ENCODE measurements at regions of chr2 and their contacts with region 1.

Region 1: DNA sequence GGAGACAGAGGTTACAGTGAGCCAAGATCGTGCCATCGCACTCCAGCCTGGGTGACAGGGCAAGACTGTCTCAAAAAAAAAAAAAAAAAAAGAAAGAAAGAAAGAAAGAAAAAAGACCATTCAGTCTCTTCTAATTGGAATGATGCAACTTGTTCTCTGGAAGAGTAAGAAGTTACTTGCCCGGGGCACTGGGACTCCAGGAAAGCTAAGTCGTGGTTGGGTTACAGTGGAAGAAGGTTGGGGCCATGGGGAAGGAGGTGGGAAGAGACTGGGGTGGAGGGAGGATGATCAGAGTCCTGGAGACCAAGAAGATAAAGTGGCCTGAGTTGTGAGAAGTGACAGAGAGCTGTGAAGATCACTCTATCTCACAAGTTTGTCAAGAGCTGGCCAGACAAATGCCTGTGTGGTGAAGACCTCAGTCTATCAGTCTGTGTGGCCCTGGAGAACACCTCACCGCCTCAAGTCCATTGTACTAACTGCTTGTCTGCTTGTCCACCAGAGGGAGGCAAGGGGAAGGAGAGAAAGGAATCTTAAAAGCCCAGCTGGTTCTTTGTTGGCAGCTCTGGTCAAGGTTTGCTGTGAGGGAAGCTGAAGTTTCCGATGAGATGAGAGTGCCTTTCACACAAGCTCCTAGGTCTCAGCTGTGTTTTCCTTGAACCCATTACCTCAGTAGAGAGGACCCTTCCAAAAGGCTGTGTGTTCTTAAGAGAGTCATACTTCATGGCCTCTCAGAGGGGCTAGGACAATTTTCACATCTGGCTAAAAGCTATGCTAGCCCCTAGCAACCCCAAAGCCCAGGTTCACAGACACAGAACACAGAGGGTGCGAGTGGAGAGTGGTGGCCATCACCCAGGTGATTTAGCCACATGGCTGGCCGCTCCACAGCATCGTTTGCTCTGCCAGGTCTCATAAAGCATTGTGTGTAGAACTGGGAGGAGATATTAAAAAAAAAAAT is 72.0 kb upstream of the TMEM178A start:
- DNase-seq: peak; percentile 66
- H3K4me3 ChIP-seq: no peak overlapping the region
- H3K27ac ChIP-seq: no peak overlapping the region
- H3K4me1 ChIP-seq: no peaks in the 10 kb centered on the region
- H3K27me3 ChIP-seq: no peaks in the 10 kb centered on the region
- CTCF ChIP-seq: peak; percentile 63 to 75

Region 2: DNA sequence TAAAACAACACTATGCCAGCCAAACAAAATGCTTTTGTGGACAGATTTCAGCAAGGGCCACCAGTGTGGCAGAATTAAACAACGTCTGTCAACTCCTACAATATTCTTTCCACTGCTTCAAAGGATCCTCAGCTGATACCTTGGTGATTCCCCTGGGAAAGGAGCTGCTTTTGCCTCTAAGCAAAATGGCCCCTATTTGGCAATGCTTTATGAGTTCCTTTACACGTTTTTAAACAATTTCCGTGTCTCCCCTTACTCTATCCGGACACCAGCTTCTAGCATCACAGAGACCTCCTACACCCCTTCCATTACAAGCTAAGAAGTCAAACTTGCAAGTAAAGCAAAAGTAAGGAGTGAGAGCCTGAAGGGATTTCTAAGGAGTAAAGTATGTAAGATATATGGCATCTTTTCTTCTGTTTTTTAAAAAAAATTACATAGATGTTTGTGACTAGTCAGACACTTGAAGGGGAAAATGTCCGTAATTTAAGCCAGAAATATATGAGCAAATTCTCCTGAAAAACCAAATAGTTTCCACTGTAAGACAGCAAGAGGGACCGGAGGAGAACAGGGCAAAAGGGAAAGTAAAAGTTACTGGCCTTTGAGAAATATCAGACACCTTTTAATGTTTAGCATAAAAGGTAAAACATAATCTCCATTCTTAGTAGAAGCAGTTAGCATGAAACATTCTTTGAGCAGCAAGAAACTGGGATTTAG is 474.8 kb before region 1 on chr2:
- CTCF ChIA-PET with region 1: no interaction called
- dilution Hi-C with region 1: no loop called
- in situ Hi-C with region 1: no loop called
- intact Hi-C with region 1: no loop called
- DNase-seq: peak; percentile 19
- H3K4me3 ChIP-seq: peak overlapping the region; percentile 70 to 77 (median 74)
- H3K27ac ChIP-seq: peak overlapping the region; percentile 81
- H3K4me1 ChIP-seq: peaks cover 25% of the 10 kb centered on the region
- H3K27me3 ChIP-seq: no peaks in the 10 kb centered on the region
- CTCF ChIP-seq: no peak

Region 3: GRCh38 chr2:39492095-39492590 is 101.6 kb before region 1 on chr2:
- CTCF ChIA-PET with region 1: interaction called, 15 read pairs
- dilution Hi-C with region 1: no loop called
- in situ Hi-C with region 1: no loop called
- intact Hi-C with region 1: no loop called
- DNase-seq: peak; percentile 97
- H3K4me3 ChIP-seq: no peak overlapping the region
- H3K27ac ChIP-seq: peak overlapping the region; percentile 70
- H3K4me1 ChIP-seq: peaks cover 28% of the 10 kb centered on the region
- H3K27me3 ChIP-seq: no peaks in the 10 kb centered on the region
- CTCF ChIP-seq: no peak

Region 4: DNA sequence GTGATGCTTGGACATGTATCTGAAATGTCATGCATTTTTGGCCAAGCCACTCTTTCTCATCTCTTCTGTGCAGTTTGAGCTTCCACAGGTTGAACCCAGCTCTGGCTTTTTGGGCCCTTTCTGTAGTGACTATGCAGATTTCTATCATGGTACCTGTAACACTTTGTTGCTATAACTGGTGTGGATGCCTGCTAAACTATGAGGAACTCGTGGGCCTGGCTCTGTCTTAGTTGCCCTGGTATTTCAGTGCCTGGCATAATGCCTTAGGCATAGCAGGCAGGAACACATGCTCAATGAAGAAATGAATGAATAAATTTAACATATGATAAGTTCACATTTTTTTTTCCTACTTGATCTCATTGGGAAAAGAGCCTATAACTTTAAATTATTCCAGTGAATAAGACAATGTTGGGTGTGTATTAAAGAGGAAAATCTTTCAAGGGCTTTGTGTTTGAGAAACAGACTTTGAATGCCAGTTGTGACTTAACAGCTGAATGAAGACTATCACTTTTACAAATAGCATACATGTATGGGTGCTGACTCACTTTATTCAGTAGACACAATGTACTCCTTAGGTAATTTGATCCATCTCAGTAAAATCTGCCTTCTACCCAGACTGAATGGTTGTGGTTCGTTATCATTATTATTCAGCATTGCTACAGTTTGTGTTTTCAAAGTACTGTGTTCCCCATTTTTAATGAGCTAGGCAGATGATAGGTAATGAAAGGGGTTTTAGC is 70.2 kb before region 1 on chr2:
- CTCF ChIA-PET with region 1: no interaction called
- dilution Hi-C with region 1: no loop called
- in situ Hi-C with region 1: no loop called
- intact Hi-C with region 1: loop called (anchors 2 kb)
- DNase-seq: peak; percentile 83
- H3K4me3 ChIP-seq: no peak overlapping the region
- H3K27ac ChIP-seq: peak overlapping the region; percentile 69
- H3K4me1 ChIP-seq: peaks cover 30% of the 10 kb centered on the region
- H3K27me3 ChIP-seq: no peaks in the 10 kb centered on the region
- CTCF ChIP-seq: no peak

Region 5: GRCh38 chr2:39657287-39657937 is 63.7 kb after region 1 on chr2:
- CTCF ChIA-PET with region 1: no interaction called
- dilution Hi-C with region 1: no loop called
- in situ Hi-C with region 1: no loop called
- intact Hi-C with region 1: no loop called
- DNase-seq: no peak
- H3K4me3 ChIP-seq: no peak overlapping the region
- H3K27ac ChIP-seq: no peak overlapping the region
- H3K4me1 ChIP-seq: no peaks in the 10 kb centered on the region
- H3K27me3 ChIP-seq: no peaks in the 10 kb centered on the region
- CTCF ChIP-seq: no peak

Region 6: GRCh38 chr2:39696838-39697237 is 103.1 kb after region 1 on chr2:
- CTCF ChIA-PET with region 1: interaction called, 4 read pairs
- dilution Hi-C with region 1: no loop called
- in situ Hi-C with region 1: no loop called
- intact Hi-C with region 1: loop called (anchors 1 kb)
- DNase-seq: peak; percentile 53
- H3K4me3 ChIP-seq: no peak overlapping the region
- H3K27ac ChIP-seq: no peak overlapping the region
- H3K4me1 ChIP-seq: peaks cover 7% of the 10 kb centered on the region
- H3K27me3 ChIP-seq: no peaks in the 10 kb centered on the region
- CTCF ChIP-seq: peak; percentile 37 to 39

Region 7: GRCh38 chr2:39728941-39729351 is 135.2 kb after region 1 on chr2:
- CTCF ChIA-PET with region 1: interaction called, 4 read pairs
- dilution Hi-C with region 1: no loop called
- in situ Hi-C with region 1: no loop called
- intact Hi-C with region 1: loop called (anchors 1 kb)
- DNase-seq: no peak
- H3K4me3 ChIP-seq: no peak overlapping the region
- H3K27ac ChIP-seq: no peak overlapping the region
- H3K4me1 ChIP-seq: peaks cover 23% of the 10 kb centered on the region
- H3K27me3 ChIP-seq: no peaks in the 10 kb centered on the region
- CTCF ChIP-seq: peak; percentile 79 to 90